ENCODE measurements at regions of chr9 and their contacts with region 1.

Region 1: GRCh38 chr9:112097712-112098688 is 77.1 kb downstream of the SUSD1 start:
- ATAC-seq: peak; percentile 63 to 100 (median 76)
- H3K4me3 ChIP-seq: no peak overlapping the region
- H3K27ac ChIP-seq: no peak overlapping the region
- H3K4me1 ChIP-seq: peaks cover 3 to 11% of the 10 kb centered on the region in 2 donors

Region 2: GRCh38 chr9:111759762-111760639 is 338.0 kb before region 1 on chr9:
- in situ Hi-C with region 1: loop called in 1 of 9 experiments (anchors 25 kb)
- ATAC-seq: peak in 6 of 8 experiments; percentile 29 to 97 (median 80)
- H3K4me3 ChIP-seq: no peak overlapping the region
- H3K27ac ChIP-seq: no peak overlapping the region
- H3K4me1 ChIP-seq: no peaks in the 10 kb centered on the region

Region 3: GRCh38 chr9:111992523-111992922 is 105.5 kb before region 1 on chr9:
- in situ Hi-C with region 1: no loop called
- ATAC-seq: peak in 2 of 8 experiments; percentile 53 to 57
- H3K4me3 ChIP-seq: no peak overlapping the region
- H3K27ac ChIP-seq: no peak overlapping the region
- H3K4me1 ChIP-seq: no peaks in the 10 kb centered on the region

Region 4: DNA sequence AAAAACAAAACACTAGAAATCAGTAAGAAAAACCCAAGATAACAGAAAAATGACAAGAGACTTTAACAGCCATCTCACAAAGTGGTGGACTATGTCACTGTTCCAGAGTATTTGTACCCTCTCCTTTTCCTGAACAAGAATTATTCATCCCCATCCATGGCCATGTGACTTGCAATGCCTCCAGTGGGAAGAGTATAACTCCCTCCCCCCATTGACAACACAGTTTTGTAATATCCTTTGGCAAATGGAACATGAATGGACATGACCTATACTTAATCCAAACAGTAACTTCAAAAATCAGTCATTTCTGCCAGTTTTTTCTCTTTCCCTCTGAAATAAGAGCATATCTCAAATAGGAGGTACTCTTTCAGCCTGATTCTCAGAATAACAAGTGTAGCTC is 201.5 kb after region 1 on chr9:
- in situ Hi-C with region 1: no loop called
- ATAC-seq: peak in 3 of 8 experiments; percentile 47 to 78 (median 73)
- H3K4me3 ChIP-seq: no peak overlapping the region
- H3K27ac ChIP-seq: no peak overlapping the region
- H3K4me1 ChIP-seq: no peaks in the 10 kb centered on the region

Region 5: GRCh38 chr9:112355427-112355897 is 257.5 kb after region 1 on chr9:
- in situ Hi-C with region 1: loop called (anchors 10 to 25 kb)
- ATAC-seq: no peak
- H3K4me3 ChIP-seq: no peak overlapping the region
- H3K27ac ChIP-seq: no peak overlapping the region
- H3K4me1 ChIP-seq: no peaks in the 10 kb centered on the region

Region 6: DNA sequence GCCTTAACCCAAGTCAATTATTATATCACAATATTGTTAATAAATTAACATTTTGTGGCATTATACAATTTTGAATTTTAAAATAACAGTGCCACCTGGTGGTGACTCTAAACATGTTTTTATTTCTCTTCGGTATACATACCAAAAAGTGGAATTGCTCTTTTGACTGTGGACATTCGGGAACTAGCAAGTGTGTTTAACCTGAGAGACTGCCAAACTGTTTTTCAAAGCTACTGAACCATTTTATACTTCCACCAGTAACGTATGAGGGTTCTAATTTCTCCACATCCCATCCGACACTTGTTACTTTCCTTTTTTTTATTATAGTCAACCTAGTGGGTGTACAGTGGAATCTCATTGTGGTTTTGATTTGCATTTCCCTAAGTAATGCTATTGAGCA is 263.6 kb after region 1 on chr9:
- in situ Hi-C with region 1: loop called (anchors 10 to 25 kb)
- ATAC-seq: peak in 3 of 8 experiments; percentile 39 to 61 (median 47)
- H3K4me3 ChIP-seq: no peak overlapping the region
- H3K27ac ChIP-seq: no peak overlapping the region
- H3K4me1 ChIP-seq: no peaks in the 10 kb centered on the region

Region 7: GRCh38 chr9:112717661-112718341 is 619.8 kb after region 1 on chr9 and contains the start of gene INIP:
- in situ Hi-C with region 1: loop called in 5 of 9 experiments (anchors 25 kb)
- ATAC-seq: peak; percentile 96 to 98 (median 97)
- H3K4me3 ChIP-seq: peak within 1 kb of the TSS; percentile 72 to 96 (median 74)
- H3K27ac ChIP-seq: peak within 1 kb of the TSS; percentile 65 to 79
- H3K4me1 ChIP-seq: peaks cover 4 to 6% of the 10 kb centered on the region in 2 donors
- total RNA-seq, gene INIP: 10.0 to 26.8 (median 23.4) TPM

Measured in motor neuron (in vitro differentiated cells).